Vagina (tissue), 2 donors: ENCODE measurements at regions of chr2 and their contacts with region 1.

Region 1: DNA sequence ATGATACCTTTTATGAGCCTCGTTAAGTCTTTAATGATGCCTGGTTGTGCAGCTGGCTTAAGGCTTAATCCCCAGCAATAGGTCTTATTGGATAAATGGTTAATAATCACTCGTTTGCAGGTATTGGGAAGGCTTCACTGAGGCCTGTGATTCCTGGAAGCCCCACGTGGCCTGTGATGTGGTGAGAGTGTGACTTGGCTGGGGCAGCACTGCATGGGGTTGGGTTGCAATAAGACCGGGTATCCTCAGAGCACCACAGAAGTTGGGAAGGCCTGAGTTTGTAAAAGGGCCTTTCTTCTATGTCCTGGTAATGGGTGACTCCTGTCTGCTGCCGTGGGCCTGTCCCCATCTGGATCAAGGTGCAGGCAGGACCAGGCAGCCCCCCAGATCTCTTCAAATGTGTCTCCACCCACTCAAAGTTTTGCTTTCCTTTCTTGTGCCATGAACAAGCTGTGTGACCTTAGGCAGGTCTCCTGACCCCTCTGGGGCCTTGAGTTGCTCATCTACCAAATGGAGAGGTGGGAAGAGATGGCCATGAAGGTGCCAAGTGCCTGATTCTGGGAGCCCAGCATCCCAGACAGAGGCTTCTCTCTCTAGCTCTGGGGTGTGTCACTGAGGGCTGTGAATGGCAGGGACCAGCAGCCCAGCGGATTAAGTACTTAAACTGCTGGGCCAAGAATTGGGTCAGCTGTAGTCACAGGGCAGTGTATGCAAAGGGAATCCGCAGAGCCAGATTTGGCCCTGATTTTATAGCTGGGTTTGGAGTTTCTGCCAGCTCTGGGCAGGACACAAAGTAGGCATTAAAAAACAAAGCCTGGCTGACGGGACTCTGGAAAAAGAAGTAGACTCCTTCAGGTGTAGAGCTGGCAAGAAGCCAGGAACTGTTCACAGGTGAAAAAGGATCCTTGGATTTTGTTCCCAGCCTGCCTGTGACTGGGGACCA is 24.4 kb downstream of the LBH start:
- DNase-seq: no peak
- H3K4me3 ChIP-seq: no peak overlapping the region
- H3K27ac ChIP-seq: peak overlapping the region; percentile 28
- H3K4me1 ChIP-seq: peaks cover 44% of the 10 kb centered on the region
- H3K27me3 ChIP-seq: no peaks in the 10 kb centered on the region
- CTCF ChIP-seq: no peak
- POLR2A ChIP-seq: no peak

Region 2: DNA sequence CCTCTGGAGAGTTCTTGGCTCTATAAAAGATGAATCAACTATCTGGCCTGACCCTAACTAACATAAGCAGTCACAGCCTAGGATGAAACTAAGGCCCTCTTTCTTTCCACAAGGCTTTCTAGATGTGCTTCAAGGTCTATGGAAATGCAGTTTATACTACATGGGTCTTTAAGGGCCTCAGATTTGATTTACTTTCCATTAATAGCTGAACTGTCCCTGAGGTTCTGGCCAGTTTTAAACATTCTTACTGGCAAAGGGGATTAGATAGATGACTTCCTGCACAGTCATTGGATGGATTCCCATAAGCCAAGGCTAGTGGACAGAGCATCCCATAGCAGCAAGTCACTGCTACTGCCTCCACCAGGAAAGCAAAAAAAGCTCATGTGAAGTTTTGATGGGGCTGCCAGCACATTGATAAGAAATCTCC is 153.2 kb after region 1 on chr2:
- intact Hi-C with region 1: loop called (anchors 5 kb)
- DNase-seq: no peak
- H3K4me3 ChIP-seq: no peak overlapping the region
- H3K27ac ChIP-seq: peak overlapping the region; percentile 41
- H3K4me1 ChIP-seq: peaks cover 49% of the 10 kb centered on the region
- H3K27me3 ChIP-seq: no peaks in the 10 kb centered on the region
- CTCF ChIP-seq: no peak
- POLR2A ChIP-seq: no peak

Region 3: GRCh38 chr2:30691948-30692828 is 436.5 kb after region 1 on chr2:
- intact Hi-C with region 1: no loop called
- DNase-seq: peak in 1 of 2 donors; percentile 77
- H3K4me3 ChIP-seq: no peak overlapping the region
- H3K27ac ChIP-seq: no peak overlapping the region
- H3K4me1 ChIP-seq: peaks cover 15% of the 10 kb centered on the region
- H3K27me3 ChIP-seq: no peaks in the 10 kb centered on the region
- CTCF ChIP-seq: no peak
- POLR2A ChIP-seq: no peak